CD4-positive, alpha-beta T cell (primary cell): ENCODE measurements at regions of chr7 and their contacts with region 1.

Region 1: DNA sequence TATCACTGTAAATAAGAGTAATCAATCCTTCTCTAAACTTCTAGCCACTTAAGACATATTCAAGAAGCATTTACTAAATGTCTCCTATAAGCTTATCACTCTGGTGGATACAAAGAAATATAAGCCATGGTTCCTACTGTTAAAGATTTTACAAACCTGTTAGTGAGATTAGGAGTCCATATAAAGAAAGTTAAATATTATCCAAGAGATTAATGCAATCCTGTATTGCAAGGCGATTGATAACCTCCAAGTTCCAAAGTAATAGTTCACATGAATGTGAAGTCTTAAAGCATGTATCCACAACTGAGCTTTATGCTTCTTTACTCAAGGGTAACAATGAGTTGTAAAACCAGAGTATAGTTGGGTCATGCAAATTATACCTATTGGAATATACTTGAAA is 12.6 kb upstream of the BET1 start:
- DNase-seq: no peak
- ATAC-seq: no peak
- H3K4me3 ChIP-seq: no peak overlapping the region
- H3K4me3 Mint-ChIP-seq: no peak overlapping the region
- H3K27ac ChIP-seq: no peak overlapping the region
- H3K27ac Mint-ChIP-seq: no peak overlapping the region
- H3K4me1 ChIP-seq: no peaks in the 10 kb centered on the region
- H3K4me1 Mint-ChIP-seq: no peaks in the 10 kb centered on the region
- H3K27me3 ChIP-seq: no peaks in the 10 kb centered on the region
- H3K27me3 Mint-ChIP-seq: peaks cover 29% of the 10 kb centered on the region
- CTCF ChIP-seq: no peak

Region 2: GRCh38 chr7:93992423-93993110 is 24.2 kb before region 1 on chr7:
- CTCF ChIA-PET with region 1: no interaction called
- POLR2A ChIA-PET with region 1: no interaction called
- intact Hi-C with region 1: loop called in 1 of 2 experiments (anchors 2 kb)
- DNase-seq: no peak
- ATAC-seq: no peak
- H3K4me3 ChIP-seq: no peak overlapping the region
- H3K4me3 Mint-ChIP-seq: no peak overlapping the region
- H3K27ac ChIP-seq: no peak overlapping the region
- H3K27ac Mint-ChIP-seq: no peak overlapping the region
- H3K4me1 ChIP-seq: no peaks in the 10 kb centered on the region
- H3K4me1 Mint-ChIP-seq: peaks cover 11% of the 10 kb centered on the region
- H3K27me3 ChIP-seq: no peaks in the 10 kb centered on the region
- H3K27me3 Mint-ChIP-seq: no peaks in the 10 kb centered on the region
- CTCF ChIP-seq: no peak

Region 3: DNA sequence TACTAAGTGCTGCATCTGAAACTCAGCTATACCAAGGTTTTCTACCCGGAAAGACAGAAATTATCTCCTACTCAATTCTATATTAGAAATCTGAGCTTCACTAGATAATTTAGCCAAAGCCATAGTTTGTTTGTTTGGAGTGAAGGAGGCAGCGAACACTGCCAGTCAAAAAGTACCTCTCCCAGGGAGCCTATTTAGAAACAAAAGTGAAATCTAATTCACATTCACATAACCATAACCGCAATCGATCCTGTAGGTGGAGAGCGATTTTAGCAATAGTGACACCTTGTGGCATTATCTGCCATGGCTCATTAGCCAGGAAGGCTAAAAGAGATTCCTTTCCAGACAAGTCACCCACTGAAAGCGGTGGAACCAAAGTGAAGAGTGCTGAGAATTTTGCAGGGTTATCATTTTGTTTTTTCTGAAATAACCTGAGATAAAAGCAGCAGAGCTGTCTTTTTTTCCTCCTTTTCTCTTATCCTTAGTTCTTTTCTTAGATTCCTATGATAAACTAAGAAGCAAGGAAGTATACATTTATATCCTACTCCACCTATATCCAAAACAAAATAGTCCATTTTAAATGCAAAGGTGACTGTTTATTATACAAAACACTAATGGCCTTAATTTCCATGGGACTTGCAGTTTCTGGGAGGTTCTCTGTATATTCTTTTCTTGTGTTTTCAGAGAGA is 71.0 kb after region 1 on chr7:
- CTCF ChIA-PET with region 1: no interaction called
- POLR2A ChIA-PET with region 1: no interaction called
- intact Hi-C with region 1: no loop called
- DNase-seq: peak in 9 of 14 experiments; percentile 4 to 78 (median 22)
- ATAC-seq: peak; percentile 85
- H3K4me3 ChIP-seq: peak overlapping the region; percentile 21
- H3K4me3 Mint-ChIP-seq: peak overlapping the region; percentile 78
- H3K27ac ChIP-seq: no peak overlapping the region
- H3K27ac Mint-ChIP-seq: no peak overlapping the region
- H3K4me1 ChIP-seq: no peaks in the 10 kb centered on the region
- H3K4me1 Mint-ChIP-seq: peaks cover 7% of the 10 kb centered on the region
- H3K27me3 ChIP-seq: peaks cover 5 to 7% of the 10 kb centered on the region in 2 experiments
- H3K27me3 Mint-ChIP-seq: peaks cover 42% of the 10 kb centered on the region
- CTCF ChIP-seq: peak; percentile 72